K562 (cell line): ENCODE measurements at regions of chr14 and their contacts with region 1.

Region 1: DNA sequence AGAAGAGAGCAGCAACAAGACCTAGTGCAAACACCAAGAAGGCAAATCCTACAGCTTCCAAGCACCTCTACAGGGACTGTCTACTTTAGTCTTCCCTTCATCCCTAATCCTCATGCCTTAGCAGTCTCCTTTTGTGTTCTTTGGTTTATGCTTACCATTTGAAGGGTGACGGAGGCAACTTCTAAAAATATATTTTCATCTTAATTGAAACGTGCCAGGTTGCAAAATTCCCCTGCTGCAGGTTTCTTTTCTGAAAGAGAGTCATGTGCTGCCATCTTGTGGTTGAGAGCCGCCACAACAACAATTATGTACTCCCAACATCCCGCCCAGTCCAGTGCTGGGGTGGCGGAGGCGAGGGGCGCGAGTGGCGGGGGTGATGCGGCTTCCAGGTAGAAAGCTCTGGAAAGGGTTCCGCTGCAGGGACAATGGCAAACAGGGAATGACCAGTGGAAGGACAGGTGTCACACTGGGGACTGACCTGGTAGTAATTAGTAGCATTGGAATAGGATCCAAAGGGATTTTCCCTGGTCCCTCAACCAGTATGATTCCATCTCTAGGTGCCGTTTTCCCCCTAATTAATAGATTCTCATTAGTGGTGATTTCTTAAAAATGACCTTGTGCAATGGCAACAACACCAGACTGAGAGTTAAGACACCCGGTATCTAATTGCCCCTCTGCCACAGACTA is 80.3 kb upstream of the GNG2 start:
- DNase-seq: peak; percentile 42 to 62 (median 52)
- ATAC-seq: peak; percentile 82
- H3K4me3 ChIP-seq: no peak overlapping the region
- H3K27ac ChIP-seq: no peak overlapping the region
- H3K4me1 ChIP-seq: no peaks in the 10 kb centered on the region
- H3K27me3 ChIP-seq: no peaks in the 10 kb centered on the region
- CTCF ChIP-seq: peak; percentile 54 to 64 (median 58)
- EP300 ChIP-seq: no peak
- POLR2A ChIP-seq: no peak
- RAD21 ChIP-seq: peak; percentile 56 to 62

Region 2: DNA sequence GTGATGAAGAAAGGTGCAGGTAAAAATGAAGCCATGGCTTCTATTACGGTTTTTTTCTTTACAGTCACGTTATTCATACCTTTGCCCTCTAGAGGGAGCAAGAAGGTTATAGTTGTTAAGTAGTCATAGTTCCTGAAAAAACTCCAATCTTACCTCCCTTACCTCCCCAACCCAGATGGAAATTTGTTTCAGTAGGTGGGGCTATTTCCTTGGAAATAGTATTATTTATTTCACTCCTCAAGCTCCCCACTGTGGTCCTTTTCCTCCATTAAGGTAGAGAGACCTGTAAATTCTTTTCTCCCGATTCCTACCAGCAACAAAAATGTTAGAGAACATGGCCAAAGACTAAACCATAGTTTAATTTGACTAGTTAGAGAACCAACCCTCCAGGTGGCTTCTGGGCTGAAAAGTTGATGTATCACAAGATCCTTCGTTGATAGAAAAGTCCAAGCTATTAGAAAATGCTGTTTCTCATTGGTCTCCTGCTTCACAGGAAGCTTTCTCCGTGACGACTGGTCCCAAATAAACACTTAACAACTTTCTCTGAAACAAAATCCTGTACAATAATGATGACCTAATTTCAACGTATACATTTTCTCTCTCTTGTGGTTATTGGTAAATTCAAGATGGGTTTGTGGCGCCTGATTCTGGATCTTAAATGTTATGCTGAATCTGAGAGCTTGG is 496.6 kb before region 1 on chr14:
- CTCF ChIA-PET with region 1: interaction called, 10 read pairs
- POLR2A ChIA-PET with region 1: no interaction called
- in situ Hi-C with region 1: loop called (anchors 5 kb)
- intact Hi-C with region 1: loop called (anchors 1 kb)
- DNase-seq: peak; percentile 40 to 62 (median 50)
- ATAC-seq: peak; percentile 69
- H3K4me3 ChIP-seq: no peak overlapping the region
- H3K27ac ChIP-seq: no peak overlapping the region
- H3K4me1 ChIP-seq: no peaks in the 10 kb centered on the region
- H3K27me3 ChIP-seq: no peaks in the 10 kb centered on the region
- CTCF ChIP-seq: peak; percentile 31 to 67 (median 50); a peak in 5 of 6 replicates
- EP300 ChIP-seq: no peak
- POLR2A ChIP-seq: no peak
- RAD21 ChIP-seq: peak; percentile 33 to 55; a peak in 3 of 4 replicates

Region 3: GRCh38 chr14:51369814-51370213 is 410.3 kb before region 1 on chr14:
- CTCF ChIA-PET with region 1: no interaction called
- POLR2A ChIA-PET with region 1: no interaction called
- in situ Hi-C with region 1: no loop called
- intact Hi-C with region 1: loop called (anchors 1 kb)
- DNase-seq: peak; percentile 11 to 38 (median 28)
- ATAC-seq: peak; percentile 64
- H3K4me3 ChIP-seq: no peak overlapping the region
- H3K27ac ChIP-seq: no peak overlapping the region
- H3K4me1 ChIP-seq: no peaks in the 10 kb centered on the region
- H3K27me3 ChIP-seq: no peaks in the 10 kb centered on the region
- CTCF ChIP-seq: peak; percentile 32 to 39 (median 38); a peak in 5 of 6 replicates
- EP300 ChIP-seq: no peak
- POLR2A ChIP-seq: no peak
- RAD21 ChIP-seq: peak; percentile 21 to 27; a peak in 2 of 4 replicates

Region 4: DNA sequence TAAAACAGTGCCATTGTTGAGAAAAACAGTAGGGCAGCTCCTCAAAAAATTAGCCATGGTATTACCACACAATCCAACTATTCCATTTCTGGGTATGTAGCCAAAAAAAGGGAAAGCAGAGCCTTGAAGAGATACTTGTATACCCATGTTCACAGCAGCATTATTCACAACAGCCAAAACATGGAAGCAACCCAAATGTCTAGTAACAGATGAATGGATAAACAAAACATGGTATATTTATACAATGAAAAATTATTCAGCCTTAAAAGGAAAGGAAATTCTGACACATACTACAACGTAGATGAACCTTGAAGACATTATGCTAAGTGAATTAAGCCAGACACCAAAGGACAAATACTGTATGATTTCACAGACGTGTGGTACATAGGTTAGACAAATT is 12.7 kb after region 1 on chr14:
- CTCF ChIA-PET with region 1: no interaction called
- POLR2A ChIA-PET with region 1: no interaction called
- in situ Hi-C with region 1: no loop called
- intact Hi-C with region 1: no loop called
- DNase-seq: no peak
- ATAC-seq: no peak
- H3K4me3 ChIP-seq: no peak overlapping the region
- H3K27ac ChIP-seq: no peak overlapping the region
- H3K4me1 ChIP-seq: no peaks in the 10 kb centered on the region
- H3K27me3 ChIP-seq: no peaks in the 10 kb centered on the region
- CTCF ChIP-seq: no peak
- EP300 ChIP-seq: no peak
- POLR2A ChIP-seq: no peak
- RAD21 ChIP-seq: no peak

Region 5: DNA sequence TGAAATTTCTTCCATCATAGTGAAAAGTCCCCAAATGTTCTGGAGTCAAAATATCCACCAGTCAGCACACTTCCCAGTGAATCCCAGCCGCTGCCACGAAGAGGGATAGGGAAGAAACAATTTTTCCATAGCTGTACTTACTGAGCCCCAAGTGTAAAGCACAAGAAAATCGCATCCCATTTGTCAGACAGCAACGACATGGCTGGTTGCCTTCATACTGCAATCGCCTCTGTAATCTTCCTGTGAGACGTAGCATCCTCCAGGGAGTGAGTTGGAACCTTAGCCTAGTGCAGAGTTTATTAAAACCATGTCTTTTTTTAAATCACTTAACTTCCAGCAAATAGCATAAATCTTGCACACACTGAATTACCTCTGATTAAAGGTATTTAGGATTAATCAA is 137.0 kb after region 1 on chr14:
- CTCF ChIA-PET with region 1: no interaction called
- POLR2A ChIA-PET with region 1: no interaction called
- in situ Hi-C with region 1: no loop called
- intact Hi-C with region 1: no loop called
- DNase-seq: no peak
- ATAC-seq: no peak
- H3K4me3 ChIP-seq: no peak overlapping the region
- H3K27ac ChIP-seq: no peak overlapping the region
- H3K4me1 ChIP-seq: no peaks in the 10 kb centered on the region
- H3K27me3 ChIP-seq: no peaks in the 10 kb centered on the region; a peak in 2 of 5 replicates
- CTCF ChIP-seq: no peak
- EP300 ChIP-seq: no peak
- POLR2A ChIP-seq: no peak
- RAD21 ChIP-seq: no peak

Region 6: DNA sequence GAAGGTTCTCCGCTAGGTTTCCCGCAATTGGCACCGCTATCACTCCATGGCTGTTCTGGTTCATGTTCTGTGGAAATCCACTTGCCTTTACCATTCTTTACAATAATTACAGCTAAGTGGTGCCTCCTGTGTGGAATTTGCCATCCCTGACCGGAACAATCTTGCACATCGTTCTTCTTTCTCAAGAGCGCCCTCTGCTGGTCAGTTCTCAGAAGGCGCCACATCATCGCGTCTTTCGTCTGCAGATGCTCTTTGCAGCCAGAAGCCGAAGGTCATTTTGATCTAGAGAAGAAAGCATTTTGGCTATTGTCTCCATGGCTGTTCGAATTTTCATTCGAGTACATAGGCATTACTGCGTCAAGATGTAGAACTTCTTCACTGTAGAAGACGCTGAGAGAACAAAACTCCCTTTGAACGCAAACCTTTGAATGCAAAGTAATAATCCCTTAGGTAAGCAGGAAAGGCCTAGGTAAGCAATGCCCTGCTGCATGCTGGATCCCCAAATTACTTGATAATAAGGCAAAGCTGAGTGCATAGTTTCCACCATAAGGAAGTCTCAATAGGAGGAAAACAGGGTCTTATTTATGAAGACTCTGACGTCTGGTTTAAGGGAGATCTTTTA is 199.1 kb after region 1 on chr14:
- CTCF ChIA-PET with region 1: no interaction called
- POLR2A ChIA-PET with region 1: no interaction called
- in situ Hi-C with region 1: no loop called
- intact Hi-C with region 1: loop called (anchors 5 kb)
- DNase-seq: peak; percentile 42 to 73 (median 60)
- ATAC-seq: peak; percentile 86
- H3K4me3 ChIP-seq: no peak overlapping the region
- H3K27ac ChIP-seq: no peak overlapping the region
- H3K4me1 ChIP-seq: no peaks in the 10 kb centered on the region
- H3K27me3 ChIP-seq: peaks cover 3 to 10% of the 10 kb centered on the region in 2 experiments; a peak in 3 of 5 replicates
- CTCF ChIP-seq: peak; percentile 52 to 82 (median 69)
- EP300 ChIP-seq: no peak
- POLR2A ChIP-seq: no peak
- RAD21 ChIP-seq: peak in 1 of 2 experiments; percentile 60; a peak in 3 of 4 replicates